ENCODE measurements at regions of chr3 and their contacts with region 1.

Region 1: DNA sequence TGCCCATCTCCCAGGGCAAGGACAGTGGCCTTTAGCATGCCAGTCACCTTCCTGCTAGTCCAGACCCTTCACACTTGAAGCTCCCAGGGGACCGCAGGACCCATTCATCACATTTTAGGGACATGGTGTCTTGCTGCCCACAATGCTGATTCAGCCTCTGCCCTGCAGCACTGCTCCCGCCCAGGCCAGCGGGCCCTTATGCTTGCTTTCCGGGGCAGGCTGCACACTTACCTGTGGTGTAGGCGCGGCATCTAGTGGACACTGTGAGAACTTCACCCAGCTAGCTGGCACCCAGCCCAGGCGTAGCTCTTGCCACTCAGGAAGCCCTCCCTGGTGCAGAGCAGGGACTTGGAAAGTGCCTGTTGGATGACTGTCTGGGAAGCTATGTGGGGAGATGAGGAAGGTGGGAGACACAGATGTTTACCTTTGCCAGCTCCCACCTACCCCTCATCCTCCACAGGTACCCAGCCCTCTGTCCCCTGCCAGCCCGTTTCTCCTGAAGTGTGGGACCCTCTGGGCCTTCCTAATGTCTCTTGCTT is 26.2 kb upstream of the NR2C2 start:
- DNase-seq: peak; percentile 80
- H3K4me3 ChIP-seq: no peak overlapping the region
- H3K27ac ChIP-seq: no peak overlapping the region
- H3K4me1 ChIP-seq: no peaks in the 10 kb centered on the region
- CTCF ChIP-seq: peak; percentile 93

Region 2: GRCh38 chr3:14261229-14261628 is 659.9 kb before region 1 on chr3:
- CTCF ChIA-PET with region 1: no interaction called
- POLR2A ChIA-PET with region 1: no interaction called
- intact Hi-C with region 1: loop called (anchors 5 kb)
- DNase-seq: peak; percentile 80
- H3K4me3 ChIP-seq: no peak overlapping the region
- H3K27ac ChIP-seq: no peak overlapping the region
- H3K4me1 ChIP-seq: peaks cover 6% of the 10 kb centered on the region
- CTCF ChIP-seq: peak; percentile 100

Region 3: DNA sequence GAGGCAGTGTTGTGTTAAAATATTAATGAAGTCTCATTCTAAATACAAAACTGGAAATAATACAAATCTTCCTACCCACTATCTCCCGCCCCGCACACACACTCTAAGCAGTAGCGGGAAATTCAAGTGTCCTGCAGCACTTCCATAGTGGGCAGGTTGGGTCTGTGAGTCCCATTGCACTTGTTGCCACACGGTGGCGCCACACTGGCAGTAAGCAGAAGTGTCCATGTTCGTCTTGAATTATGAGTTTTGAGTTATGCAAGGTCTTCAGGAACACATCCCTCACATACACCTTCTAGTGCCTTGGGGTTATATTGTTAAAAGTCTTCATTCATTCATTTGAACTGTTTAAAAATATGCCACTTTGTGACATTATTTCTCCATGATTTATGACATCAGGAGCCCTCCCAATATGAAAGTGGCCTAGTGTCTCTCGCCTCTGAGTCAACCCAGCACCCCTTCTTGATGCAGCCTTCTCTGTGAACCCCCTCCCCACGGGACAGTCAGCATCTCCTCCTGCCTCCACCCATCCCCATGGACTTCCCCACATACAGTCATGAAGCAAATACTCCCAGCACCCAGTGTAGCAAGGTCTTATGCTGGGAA is 287.2 kb before region 1 on chr3:
- CTCF ChIA-PET with region 1: no interaction called
- POLR2A ChIA-PET with region 1: no interaction called
- intact Hi-C with region 1: loop called (anchors 1 kb)
- DNase-seq: peak; percentile 77
- H3K4me3 ChIP-seq: no peak overlapping the region
- H3K27ac ChIP-seq: no peak overlapping the region
- H3K4me1 ChIP-seq: no peaks in the 10 kb centered on the region
- CTCF ChIP-seq: peak; percentile 96

Region 4: GRCh38 chr3:14791343-14791945 is 129.7 kb before region 1 on chr3:
- CTCF ChIA-PET with region 1: no interaction called
- POLR2A ChIA-PET with region 1: interaction called, 3 read pairs
- intact Hi-C with region 1: loop called (anchors 1 kb)
- DNase-seq: peak; percentile 60
- H3K4me3 ChIP-seq: no peak overlapping the region
- H3K27ac ChIP-seq: no peak overlapping the region
- H3K4me1 ChIP-seq: no peaks in the 10 kb centered on the region
- CTCF ChIP-seq: peak; percentile 78

Region 5: GRCh38 chr3:14857506-14857905 is 63.6 kb before region 1 on chr3:
- CTCF ChIA-PET with region 1: no interaction called
- POLR2A ChIA-PET with region 1: no interaction called
- intact Hi-C with region 1: no loop called
- DNase-seq: no peak
- H3K4me3 ChIP-seq: no peak overlapping the region
- H3K27ac ChIP-seq: no peak overlapping the region
- H3K4me1 ChIP-seq: no peaks in the 10 kb centered on the region
- CTCF ChIP-seq: no peak

Region 6: DNA sequence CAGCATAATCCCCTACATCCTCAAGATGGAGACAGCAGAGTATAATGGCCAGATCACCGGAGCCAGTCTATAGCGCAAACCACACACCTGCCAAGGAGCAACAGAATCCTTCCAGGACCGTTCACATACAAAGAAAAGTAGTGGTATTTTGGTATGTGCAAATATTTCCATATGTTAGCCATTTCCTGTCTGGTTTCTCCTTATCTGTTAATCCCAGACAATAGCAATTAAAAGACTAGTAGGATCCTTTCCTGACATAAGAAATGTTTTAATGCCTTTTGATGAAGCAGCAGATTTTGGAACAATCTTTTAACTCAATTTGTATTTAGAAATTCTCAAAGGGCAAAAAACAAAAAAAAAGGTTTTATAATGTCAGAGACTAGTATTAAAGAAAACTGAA is 121.8 kb after region 1 on chr3:
- CTCF ChIA-PET with region 1: no interaction called
- POLR2A ChIA-PET with region 1: no interaction called
- intact Hi-C with region 1: loop called (anchors 5 kb)
- DNase-seq: no peak
- H3K4me3 ChIP-seq: no peak overlapping the region
- H3K27ac ChIP-seq: no peak overlapping the region
- H3K4me1 ChIP-seq: peaks cover 20% of the 10 kb centered on the region
- CTCF ChIP-seq: no peak